Head of caudate nucleus (tissue), 42 donors: ENCODE measurements at regions of chr11 and their contacts with region 1.

Region 1: DNA sequence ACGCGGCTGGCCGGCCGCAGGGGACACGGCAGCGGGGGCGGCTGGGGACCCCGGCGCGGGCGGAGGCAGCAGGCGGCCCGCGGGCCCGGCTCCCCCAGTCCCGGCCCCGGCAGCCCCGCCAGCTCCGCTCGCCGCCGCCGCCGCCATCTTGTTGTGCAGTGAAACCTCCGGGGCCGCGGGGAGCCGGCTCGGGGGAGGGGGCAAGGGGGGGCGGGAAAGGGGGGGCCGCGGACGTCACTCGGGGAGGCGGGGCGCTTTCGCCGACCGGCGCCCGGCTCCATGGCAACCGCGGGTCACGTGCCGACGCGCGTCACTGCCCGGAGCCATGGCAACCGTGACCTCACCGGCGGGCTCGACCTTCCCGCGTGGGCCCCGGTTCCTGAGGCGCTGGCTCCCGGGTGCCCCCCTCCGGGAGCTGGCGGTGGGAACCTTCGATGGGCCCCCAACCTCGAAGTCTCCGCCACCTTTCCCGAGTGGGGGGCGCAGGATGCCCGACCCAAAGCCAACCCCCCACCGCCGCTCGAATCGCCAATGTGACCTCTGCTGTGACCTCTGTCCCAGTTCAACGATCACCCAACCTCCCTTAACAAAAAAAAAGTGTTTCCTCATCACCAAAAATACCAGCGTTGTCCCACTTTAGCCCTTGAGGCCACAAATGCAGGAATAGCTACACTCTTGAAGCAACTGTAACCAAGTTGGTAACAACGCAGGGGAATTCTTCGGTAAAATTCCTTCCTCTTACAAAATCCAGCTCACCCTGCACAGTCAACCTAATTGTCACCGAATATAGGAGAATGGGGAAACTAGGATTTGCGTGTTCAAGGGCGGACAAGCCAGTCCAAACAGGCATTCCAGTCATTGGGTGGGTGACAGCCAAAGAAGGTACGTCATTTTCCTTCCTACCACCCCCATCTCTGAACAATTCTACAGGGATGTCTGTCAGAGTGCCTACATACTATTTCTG is at the start of gene SIK3:
- DNase-seq: peak; percentile 88 to 99 (median 97)

Region 2: GRCh38 chr11:116879800-116880625 is 218.5 kb before region 1 on chr11:
- intact Hi-C with region 1: loop called (anchors 5 kb)
- DNase-seq: peak in 10 of 42 donors; percentile 35 to 74 (median 50)

Region 3: GRCh38 chr11:116890193-116890592 is 208.4 kb before region 1 on chr11:
- intact Hi-C with region 1: loop called (anchors 5 kb)
- DNase-seq: no peak

Region 4: GRCh38 chr11:116972691-116973090 is 125.9 kb before region 1 on chr11:
- intact Hi-C with region 1: loop called (anchors 10 kb)
- DNase-seq: peak in 3 of 42 donors; percentile 14 to 54 (median 47)

Region 5: GRCh38 chr11:117045196-117045595 is 53.4 kb before region 1 on chr11:
- intact Hi-C with region 1: loop called (anchors 10 kb)
- DNase-seq: no peak